ENCODE measurements at regions of chr14 and their contacts with region 1.

Region 1: GRCh38 chr14:31207755-31208545 is at the start of gene HECTD1:
- DNase-seq: peak in 4 of 5 donors; percentile 73 to 95 (median 84)
- H3K4me3 ChIP-seq: peak within 1 kb of the TSS; percentile 83
- H3K27ac ChIP-seq: peak within 1 kb of the TSS; percentile 98 to 99
- H3K4me1 ChIP-seq: peaks cover 3% of the 10 kb centered on the region
- H3K27me3 ChIP-seq: no peaks in the 10 kb centered on the region
- CTCF ChIP-seq: peak; percentile 74 to 92 (median 89)
- EP300 ChIP-seq: no peak
- POLR2A ChIP-seq: peak; percentile 24
- total RNA-seq, gene HECTD1: 124 to 186 (median 151) TPM

Region 2: DNA sequence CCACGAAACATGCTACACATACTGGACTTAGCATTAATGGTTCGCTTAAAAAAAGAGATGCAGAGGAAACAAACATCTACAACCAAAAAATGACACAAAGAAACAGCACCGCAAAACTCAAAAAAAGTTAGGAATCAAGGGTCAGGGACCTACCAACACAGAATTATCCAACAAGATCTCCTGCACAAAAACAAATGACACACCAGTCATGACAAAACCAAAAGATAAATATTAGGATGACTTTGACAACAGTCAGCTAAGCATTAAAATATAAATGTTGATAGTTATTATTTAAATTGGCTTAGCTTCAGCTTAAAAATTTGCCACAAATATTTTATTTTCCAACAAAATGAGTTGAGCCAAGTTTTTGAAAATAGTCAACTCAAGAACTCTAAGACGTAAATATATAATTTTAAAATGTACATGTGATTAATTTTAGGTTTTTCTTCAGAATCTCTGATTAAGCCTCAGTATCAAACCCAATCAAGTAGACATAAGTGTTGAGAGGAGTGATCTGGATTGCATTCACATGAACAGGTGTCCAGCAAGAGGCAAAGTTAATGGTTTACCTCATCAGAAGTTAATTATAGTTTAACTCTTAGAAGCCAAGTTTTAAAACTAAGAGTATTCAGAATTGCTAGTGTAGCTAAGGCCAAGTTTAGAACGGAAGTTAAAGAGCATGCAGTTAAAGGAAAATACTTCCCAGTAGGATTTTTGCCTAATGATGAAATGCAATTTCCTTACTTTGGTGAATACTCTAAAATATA is 132.5 kb after region 1 on chr14:
- intact Hi-C with region 1: loop called in 1 of 4 experiments (anchors 10 kb)
- DNase-seq: no peak
- H3K4me3 ChIP-seq: no peak overlapping the region
- H3K27ac ChIP-seq: no peak overlapping the region
- H3K4me1 ChIP-seq: no peaks in the 10 kb centered on the region
- H3K27me3 ChIP-seq: no peaks in the 10 kb centered on the region
- CTCF ChIP-seq: no peak
- EP300 ChIP-seq: no peak
- POLR2A ChIP-seq: no peak

Region 3: DNA sequence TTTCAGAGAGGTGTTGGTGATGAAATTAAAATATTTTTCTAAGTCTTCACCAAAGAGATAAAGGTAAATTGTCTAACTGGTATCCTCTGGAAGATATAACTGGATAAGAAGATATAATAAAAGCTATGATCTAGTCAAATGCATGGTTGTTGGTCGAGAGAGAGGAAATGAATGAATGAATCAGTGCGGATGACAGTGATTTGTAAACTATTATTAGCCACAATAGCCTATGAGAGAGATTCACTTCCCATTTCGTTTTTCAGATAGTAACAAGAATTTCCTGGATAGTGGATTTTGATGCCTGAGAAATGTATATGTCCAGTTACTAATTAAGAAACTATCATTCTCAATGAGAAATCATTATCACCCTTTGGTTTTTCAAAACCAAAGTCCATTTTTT is 149.3 kb after region 1 on chr14:
- intact Hi-C with region 1: loop called in 1 of 4 experiments (anchors 10 kb)
- DNase-seq: no peak
- H3K4me3 ChIP-seq: no peak overlapping the region
- H3K27ac ChIP-seq: no peak overlapping the region
- H3K4me1 ChIP-seq: peaks cover 1% of the 10 kb centered on the region
- H3K27me3 ChIP-seq: no peaks in the 10 kb centered on the region
- CTCF ChIP-seq: no peak
- EP300 ChIP-seq: no peak
- POLR2A ChIP-seq: no peak

Measured in ovary (tissue), 10 donors.